Caco-2 (cell line): ENCODE measurements at regions of chr11 and their contacts with region 1.

Region 1: GRCh38 chr11:93921695-93922468 is 71.5 kb upstream of the VSTM5 start:
- DNase-seq: peak; percentile 71 to 77
- H3K4me3 ChIP-seq: no peak overlapping the region
- H3K4me3 Mint-ChIP-seq: no peak overlapping the region
- H3K27ac Mint-ChIP-seq: no peak overlapping the region
- H3K4me1 ChIP-seq: no peaks in the 10 kb centered on the region
- H3K4me1 Mint-ChIP-seq: peaks cover 10% of the 10 kb centered on the region
- H3K27me3 ChIP-seq: no peaks in the 10 kb centered on the region
- H3K27me3 Mint-ChIP-seq: peaks cover 4% of the 10 kb centered on the region
- CTCF ChIP-seq: peak; percentile 85 to 90

Region 2: DNA sequence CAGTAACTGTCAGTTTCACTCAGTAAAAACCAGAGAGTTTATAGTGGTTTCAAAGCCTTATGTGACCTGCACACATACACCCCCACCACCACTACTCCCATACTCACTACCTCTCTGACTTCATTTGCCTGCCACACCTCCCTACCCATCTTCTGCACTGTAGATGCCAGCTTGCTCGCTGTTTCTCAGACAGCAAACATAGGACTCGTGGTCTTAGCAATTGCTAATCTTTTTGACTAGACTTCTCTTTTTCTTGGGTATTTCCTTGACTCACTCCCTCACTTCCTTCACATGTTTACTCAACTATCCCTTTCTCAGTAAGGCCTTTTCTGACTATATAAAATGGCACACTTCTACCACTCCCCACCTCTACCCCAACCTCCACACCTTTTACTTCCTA is 232.6 kb before region 1 on chr11:
- CTCF ChIA-PET with region 1: no interaction called
- POLR2A ChIA-PET with region 1: no interaction called
- intact Hi-C with region 1: no loop called
- DNase-seq: no peak
- H3K4me3 ChIP-seq: no peak overlapping the region
- H3K4me3 Mint-ChIP-seq: no peak overlapping the region
- H3K27ac Mint-ChIP-seq: no peak overlapping the region
- H3K4me1 ChIP-seq: no peaks in the 10 kb centered on the region; the same call in 1 of the 2 replicates
- H3K4me1 Mint-ChIP-seq: no peaks in the 10 kb centered on the region
- H3K27me3 ChIP-seq: no peaks in the 10 kb centered on the region
- H3K27me3 Mint-ChIP-seq: no peaks in the 10 kb centered on the region
- CTCF ChIP-seq: no peak

Region 3: GRCh38 chr11:94107363-94107762 is 185.5 kb after region 1 on chr11:
- CTCF ChIA-PET with region 1: no interaction called
- POLR2A ChIA-PET with region 1: no interaction called
- intact Hi-C with region 1: loop called (anchors 1 kb)
- DNase-seq: no peak
- H3K4me3 ChIP-seq: no peak overlapping the region
- H3K4me3 Mint-ChIP-seq: no peak overlapping the region
- H3K27ac Mint-ChIP-seq: no peak overlapping the region
- H3K4me1 ChIP-seq: no peaks in the 10 kb centered on the region
- H3K4me1 Mint-ChIP-seq: no peaks in the 10 kb centered on the region
- H3K27me3 ChIP-seq: no peaks in the 10 kb centered on the region; the same call in 1 of the 2 replicates
- H3K27me3 Mint-ChIP-seq: no peaks in the 10 kb centered on the region
- CTCF ChIP-seq: peak in 1 of 2 experiments; percentile 24

Region 4: DNA sequence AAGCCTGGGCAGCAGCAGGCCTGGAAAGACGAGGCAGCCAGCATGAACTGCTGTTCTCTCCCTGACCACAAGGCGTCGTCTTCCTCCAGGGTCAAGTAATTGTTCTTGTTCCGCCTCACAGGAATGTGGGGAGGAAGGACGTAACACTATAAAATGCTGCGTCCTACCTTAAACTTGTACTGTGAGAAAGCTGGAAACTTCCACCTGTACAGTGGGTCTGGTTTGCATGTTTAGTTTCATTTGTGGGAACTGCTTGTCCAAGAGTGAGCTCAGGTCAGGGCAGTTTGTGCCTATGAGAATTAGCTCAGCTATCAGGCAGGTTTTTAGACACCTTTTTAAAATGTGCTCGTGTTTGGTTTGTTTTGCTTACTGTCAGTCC is 262.0 kb after region 1 on chr11:
- CTCF ChIA-PET with region 1: interaction called, 3 read pairs
- POLR2A ChIA-PET with region 1: no interaction called
- intact Hi-C with region 1: loop called (anchors 1 kb)
- DNase-seq: peak; percentile 81 to 87
- H3K4me3 ChIP-seq: no peak overlapping the region
- H3K4me3 Mint-ChIP-seq: no peak overlapping the region
- H3K27ac Mint-ChIP-seq: no peak overlapping the region
- H3K4me1 ChIP-seq: no peaks in the 10 kb centered on the region
- H3K4me1 Mint-ChIP-seq: peaks cover 11% of the 10 kb centered on the region
- H3K27me3 ChIP-seq: no peaks in the 10 kb centered on the region
- H3K27me3 Mint-ChIP-seq: no peaks in the 10 kb centered on the region
- CTCF ChIP-seq: peak; percentile 96 to 97

Region 5: DNA sequence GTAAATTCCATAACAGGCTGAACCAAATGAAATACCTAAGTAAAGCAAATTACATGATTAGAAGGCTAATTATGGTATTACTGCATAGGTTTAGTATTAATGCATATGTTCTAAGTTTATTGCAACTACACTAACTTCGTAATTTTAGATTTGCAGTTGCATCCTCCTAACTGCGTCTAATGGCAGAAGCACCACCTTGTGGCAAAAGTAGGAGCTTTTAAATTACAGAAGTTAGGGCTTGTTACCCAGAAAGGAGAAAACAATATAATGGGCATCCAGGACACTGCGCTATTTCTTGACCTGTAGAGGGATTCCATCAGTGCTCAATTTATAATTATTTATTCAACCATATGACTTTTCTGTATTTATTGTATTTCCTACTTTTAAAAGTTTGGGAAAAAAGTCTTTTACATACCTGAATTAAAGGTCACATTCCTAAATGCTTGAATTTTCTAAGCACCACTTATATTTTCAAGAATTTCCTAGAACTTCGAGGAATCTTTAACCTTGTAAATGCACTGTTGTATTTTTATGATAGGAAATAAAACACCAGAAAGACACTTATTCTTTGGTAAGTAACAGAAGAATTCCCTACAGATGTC is 495.6 kb after region 1 on chr11:
- CTCF ChIA-PET with region 1: interaction called, 3 read pairs
- POLR2A ChIA-PET with region 1: no interaction called
- intact Hi-C with region 1: loop called (anchors 1 kb)
- DNase-seq: peak in 1 of 2 experiments; percentile 58
- H3K4me3 ChIP-seq: no peak overlapping the region
- H3K4me3 Mint-ChIP-seq: no peak overlapping the region
- H3K27ac Mint-ChIP-seq: no peak overlapping the region
- H3K4me1 ChIP-seq: no peaks in the 10 kb centered on the region
- H3K4me1 Mint-ChIP-seq: no peaks in the 10 kb centered on the region
- H3K27me3 ChIP-seq: no peaks in the 10 kb centered on the region
- H3K27me3 Mint-ChIP-seq: no peaks in the 10 kb centered on the region
- CTCF ChIP-seq: peak; percentile 74 to 79